ENCODE measurements at regions of chr2 and their contacts with region 1.

Region 1: GRCh38 chr2:38264396-38265281 is 112.4 kb downstream of the ATL2 start:
- DNase-seq: no peak
- ATAC-seq: no peak
- H3K4me3 ChIP-seq: no peak overlapping the region
- H3K27ac ChIP-seq: no peak overlapping the region
- H3K4me1 ChIP-seq: peaks cover 5% of the 10 kb centered on the region
- H3K27me3 ChIP-seq: peaks cover 64% of the 10 kb centered on the region
- CTCF ChIP-seq: no peak
- POLR2A ChIP-seq: no peak
- RAD21 ChIP-seq: no peak

Region 2: DNA sequence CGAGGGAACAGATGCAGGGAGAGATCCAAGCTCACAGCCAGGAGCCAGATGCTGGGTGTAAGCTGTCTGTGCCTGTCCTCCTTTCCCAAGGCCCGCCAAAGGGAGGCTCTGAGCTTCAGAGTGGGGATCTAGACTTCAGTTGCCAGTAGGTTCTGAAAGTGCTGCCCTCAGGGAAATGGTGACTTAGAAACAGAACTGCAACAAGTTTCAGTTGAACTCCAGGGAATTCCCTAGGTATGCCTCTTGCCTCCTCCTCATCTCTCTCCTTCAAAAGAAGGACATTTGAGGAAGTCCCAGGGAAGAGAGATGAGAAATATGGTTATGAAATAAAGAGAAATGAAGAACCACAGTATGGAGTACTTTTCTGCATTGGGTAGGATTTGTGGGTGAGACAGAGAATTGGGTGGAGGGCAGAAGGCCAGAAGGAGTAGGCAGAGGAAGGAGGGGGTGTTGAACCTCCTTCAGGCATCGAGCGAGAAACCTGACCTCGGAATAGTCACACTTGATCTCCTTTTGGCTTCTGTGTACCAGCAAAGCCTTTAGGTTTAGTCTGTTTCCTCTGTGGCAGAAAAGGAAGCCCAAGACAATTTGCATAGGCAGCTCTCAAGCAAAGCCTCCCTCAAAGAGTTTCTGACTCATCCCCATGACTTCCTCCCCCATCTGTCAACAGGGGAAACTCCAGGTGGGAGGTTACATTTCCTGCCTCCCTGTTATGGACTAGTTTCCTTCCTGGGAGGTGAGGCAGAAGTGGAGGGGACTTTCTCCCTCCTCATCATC is 874.5 kb before region 1 on chr2:
- CTCF ChIA-PET with region 1: no interaction called
- POLR2A ChIA-PET with region 1: no interaction called
- dilution Hi-C with region 1: no loop called
- in situ Hi-C with region 1: loop called (anchors 10 kb)
- intact Hi-C with region 1: no loop called
- DNase-seq: peak; percentile 96
- ATAC-seq: peak; percentile 60
- H3K4me3 ChIP-seq: no peak overlapping the region
- H3K27ac ChIP-seq: peak overlapping the region; percentile 26
- H3K4me1 ChIP-seq: peaks cover 27% of the 10 kb centered on the region
- H3K27me3 ChIP-seq: no peaks in the 10 kb centered on the region
- CTCF ChIP-seq: no peak
- POLR2A ChIP-seq: 0 out of 2 replicates have a peak, but pooled peaks have one; percentile 25
- RAD21 ChIP-seq: no peak

Region 3: GRCh38 chr2:37600735-37601134 is 663.9 kb before region 1 on chr2:
- CTCF ChIA-PET with region 1: no interaction called
- POLR2A ChIA-PET with region 1: no interaction called
- dilution Hi-C with region 1: no loop called
- in situ Hi-C with region 1: no loop called
- intact Hi-C with region 1: no loop called
- DNase-seq: no peak
- ATAC-seq: no peak
- H3K4me3 ChIP-seq: no peak overlapping the region
- H3K27ac ChIP-seq: no peak overlapping the region
- H3K4me1 ChIP-seq: peaks cover 9% of the 10 kb centered on the region
- H3K27me3 ChIP-seq: no peaks in the 10 kb centered on the region
- CTCF ChIP-seq: no peak
- POLR2A ChIP-seq: no peak
- RAD21 ChIP-seq: no peak

Region 4: DNA sequence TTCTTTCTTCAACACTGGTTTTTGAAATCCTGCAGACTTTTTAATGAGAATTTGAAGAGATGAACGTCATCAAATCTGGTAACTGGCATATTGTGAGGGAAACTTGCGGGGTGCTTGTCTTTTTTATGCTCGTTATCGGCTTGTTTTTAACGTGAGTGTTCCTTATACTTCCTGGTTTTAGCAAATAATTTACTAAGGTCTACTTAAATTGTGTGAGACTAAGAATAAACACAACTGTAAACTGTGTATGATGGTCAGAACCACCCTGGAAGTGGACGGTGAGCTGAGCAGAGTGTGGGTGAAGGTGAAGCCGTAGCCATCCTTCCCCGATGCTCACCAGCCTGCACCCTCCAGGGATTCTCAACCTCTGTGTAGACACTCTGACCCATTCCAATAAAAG is 510.9 kb before region 1 on chr2:
- CTCF ChIA-PET with region 1: no interaction called
- POLR2A ChIA-PET with region 1: no interaction called
- dilution Hi-C with region 1: no loop called
- in situ Hi-C with region 1: no loop called
- intact Hi-C with region 1: no loop called
- DNase-seq: no peak
- ATAC-seq: no peak
- H3K4me3 ChIP-seq: no peak overlapping the region
- H3K27ac ChIP-seq: no peak overlapping the region
- H3K4me1 ChIP-seq: no peaks in the 10 kb centered on the region
- H3K27me3 ChIP-seq: no peaks in the 10 kb centered on the region
- CTCF ChIP-seq: no peak
- POLR2A ChIP-seq: no peak
- RAD21 ChIP-seq: no peak

Region 5: GRCh38 chr2:37993143-37993542 is 271.5 kb before region 1 on chr2:
- CTCF ChIA-PET with region 1: no interaction called
- POLR2A ChIA-PET with region 1: no interaction called
- dilution Hi-C with region 1: no loop called
- in situ Hi-C with region 1: loop called (anchors 5 kb)
- intact Hi-C with region 1: no loop called
- DNase-seq: peak; percentile 25
- ATAC-seq: no peak
- H3K4me3 ChIP-seq: no peak overlapping the region
- H3K27ac ChIP-seq: no peak overlapping the region
- H3K4me1 ChIP-seq: no peaks in the 10 kb centered on the region
- H3K27me3 ChIP-seq: no peaks in the 10 kb centered on the region
- CTCF ChIP-seq: 0 out of 2 replicates have a peak, but pooled peaks have one; percentile 18
- POLR2A ChIP-seq: no peak
- RAD21 ChIP-seq: peak; percentile 21; the same call in 1 of the 2 replicates

Region 6: GRCh38 chr2:38037757-38038621 is 226.7 kb before region 1 on chr2:
- CTCF ChIA-PET with region 1: no interaction called
- POLR2A ChIA-PET with region 1: no interaction called
- dilution Hi-C with region 1: no loop called
- in situ Hi-C with region 1: no loop called
- intact Hi-C with region 1: loop called (anchors 5 kb)
- DNase-seq: peak; percentile 47
- ATAC-seq: peak; percentile 84
- H3K4me3 ChIP-seq: peak overlapping the region; percentile 9
- H3K27ac ChIP-seq: peak overlapping the region; percentile 32; the same call in 1 of the 2 replicates
- H3K4me1 ChIP-seq: peaks cover 6% of the 10 kb centered on the region; the same call in 1 of the 2 replicates
- H3K27me3 ChIP-seq: peaks cover 28% of the 10 kb centered on the region
- CTCF ChIP-seq: no peak
- POLR2A ChIP-seq: no peak
- RAD21 ChIP-seq: no peak

Region 7: GRCh38 chr2:38076606-38077430 is 187.8 kb before region 1 on chr2:
- CTCF ChIA-PET with region 1: no interaction called
- POLR2A ChIA-PET with region 1: no interaction called
- dilution Hi-C with region 1: no loop called
- in situ Hi-C with region 1: no loop called
- intact Hi-C with region 1: loop called (anchors 1 kb)
- DNase-seq: peak; percentile 90
- ATAC-seq: peak; percentile 83
- H3K4me3 ChIP-seq: peak overlapping the region; percentile 35
- H3K27ac ChIP-seq: peak overlapping the region; percentile 57
- H3K4me1 ChIP-seq: no peaks in the 10 kb centered on the region
- H3K27me3 ChIP-seq: peaks cover 30% of the 10 kb centered on the region
- CTCF ChIP-seq: 0 out of 2 replicates have a peak, but pooled peaks have one; percentile 16
- POLR2A ChIP-seq: peak; percentile 66
- RAD21 ChIP-seq: no peak; the same call in 1 of the 2 replicates

Region 8: DNA sequence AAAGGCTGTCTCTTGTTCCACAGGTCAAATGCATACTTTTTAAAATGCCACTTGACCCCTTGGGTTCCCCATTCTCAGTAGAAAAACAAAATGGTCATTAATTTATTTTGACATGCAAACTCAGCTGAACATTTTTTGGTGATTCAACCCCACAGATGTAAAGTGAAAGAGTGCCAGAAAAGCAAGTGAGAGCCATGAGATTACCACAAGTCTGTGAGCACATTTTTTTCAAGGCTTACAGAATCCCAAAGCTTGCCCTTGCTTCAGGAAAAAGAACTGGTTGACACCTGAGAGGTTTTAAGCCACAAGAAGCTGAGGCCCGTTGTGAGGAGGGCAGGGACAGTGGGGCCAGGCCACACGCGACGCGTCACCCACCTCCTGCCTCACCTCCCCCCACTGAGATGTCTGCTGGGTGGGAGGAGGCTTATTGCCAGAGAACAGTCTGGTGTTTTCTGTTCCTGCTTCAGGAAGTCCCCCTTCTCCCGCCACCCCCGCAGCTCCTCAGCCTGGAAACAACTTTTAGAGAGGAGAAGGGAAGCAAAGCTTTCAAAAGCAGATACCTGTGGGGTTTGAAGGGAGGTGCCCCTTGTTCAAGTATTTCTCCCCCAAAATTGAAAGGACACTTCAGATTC is 118.2 kb before region 1 on chr2:
- CTCF ChIA-PET with region 1: no interaction called
- POLR2A ChIA-PET with region 1: no interaction called
- dilution Hi-C with region 1: no loop called
- in situ Hi-C with region 1: no loop called
- intact Hi-C with region 1: loop called (anchors 10 kb)
- DNase-seq: peak; percentile 95
- ATAC-seq: peak; percentile 72
- H3K4me3 ChIP-seq: no peak overlapping the region
- H3K27ac ChIP-seq: peak overlapping the region; percentile 95
- H3K4me1 ChIP-seq: peaks cover 12% of the 10 kb centered on the region
- H3K27me3 ChIP-seq: no peaks in the 10 kb centered on the region
- CTCF ChIP-seq: no peak
- POLR2A ChIP-seq: no peak; the same call in 1 of the 2 replicates
- RAD21 ChIP-seq: no peak

Region 9: GRCh38 chr2:38190542-38191218 is 74.0 kb before region 1 on chr2:
- CTCF ChIA-PET with region 1: no interaction called
- POLR2A ChIA-PET with region 1: no interaction called
- dilution Hi-C with region 1: no loop called
- in situ Hi-C with region 1: no loop called
- intact Hi-C with region 1: loop called (anchors 5 kb)
- DNase-seq: peak; percentile 47
- ATAC-seq: peak; percentile 56
- H3K4me3 ChIP-seq: no peak overlapping the region
- H3K27ac ChIP-seq: peak overlapping the region; percentile 43; the same call in 1 of the 2 replicates
- H3K4me1 ChIP-seq: peaks cover 5% of the 10 kb centered on the region; the same call in 1 of the 2 replicates
- H3K27me3 ChIP-seq: no peaks in the 10 kb centered on the region
- CTCF ChIP-seq: no peak
- POLR2A ChIP-seq: no peak
- RAD21 ChIP-seq: no peak

Region 10: GRCh38 chr2:38248255-38248654 is 16.4 kb before region 1 on chr2:
- CTCF ChIA-PET with region 1: no interaction called
- POLR2A ChIA-PET with region 1: no interaction called
- dilution Hi-C with region 1: no loop called
- in situ Hi-C with region 1: no loop called
- intact Hi-C with region 1: no loop called
- DNase-seq: no peak
- ATAC-seq: no peak
- H3K4me3 ChIP-seq: no peak overlapping the region
- H3K27ac ChIP-seq: no peak overlapping the region
- H3K4me1 ChIP-seq: no peaks in the 10 kb centered on the region
- H3K27me3 ChIP-seq: peaks cover 32% of the 10 kb centered on the region
- CTCF ChIP-seq: no peak
- POLR2A ChIP-seq: no peak
- RAD21 ChIP-seq: no peak

Region 11: GRCh38 chr2:38394903-38395341 is 130.3 kb after region 1 on chr2:
- CTCF ChIA-PET with region 1: no interaction called
- POLR2A ChIA-PET with region 1: no interaction called
- dilution Hi-C with region 1: no loop called
- in situ Hi-C with region 1: no loop called
- intact Hi-C with region 1: no loop called
- DNase-seq: no peak
- ATAC-seq: no peak
- H3K4me3 ChIP-seq: no peak overlapping the region
- H3K27ac ChIP-seq: no peak overlapping the region
- H3K4me1 ChIP-seq: no peaks in the 10 kb centered on the region
- H3K27me3 ChIP-seq: peaks cover 22% of the 10 kb centered on the region
- CTCF ChIP-seq: no peak
- POLR2A ChIP-seq: no peak
- RAD21 ChIP-seq: no peak